ENCODE measurements at regions of chr17 and their contacts with region 1.

Region 1: GRCh38 chr17:7989781-7990655 is 12.4 kb upstream of the GUCY2D start:
- DNase-seq: peak; percentile 49
- ATAC-seq: peak; percentile 94
- H3K4me3 ChIP-seq: peak overlapping the region; percentile 63; the same call in 1 of the 2 replicates
- H3K27ac ChIP-seq: no peak overlapping the region
- H3K4me1 ChIP-seq: peaks cover 5% of the 10 kb centered on the region
- H3K27me3 ChIP-seq: 0 out of 4 replicates have a peak, but pooled peaks cover 0 to 2% of the 10 kb centered on the region in 2 experiments
- CTCF ChIP-seq: peak; percentile 93 to 98 (median 94)
- EP300 ChIP-seq: no peak
- POLR2A ChIP-seq: peak; percentile 74
- RAD21 ChIP-seq: peak; percentile 68

Region 2: DNA sequence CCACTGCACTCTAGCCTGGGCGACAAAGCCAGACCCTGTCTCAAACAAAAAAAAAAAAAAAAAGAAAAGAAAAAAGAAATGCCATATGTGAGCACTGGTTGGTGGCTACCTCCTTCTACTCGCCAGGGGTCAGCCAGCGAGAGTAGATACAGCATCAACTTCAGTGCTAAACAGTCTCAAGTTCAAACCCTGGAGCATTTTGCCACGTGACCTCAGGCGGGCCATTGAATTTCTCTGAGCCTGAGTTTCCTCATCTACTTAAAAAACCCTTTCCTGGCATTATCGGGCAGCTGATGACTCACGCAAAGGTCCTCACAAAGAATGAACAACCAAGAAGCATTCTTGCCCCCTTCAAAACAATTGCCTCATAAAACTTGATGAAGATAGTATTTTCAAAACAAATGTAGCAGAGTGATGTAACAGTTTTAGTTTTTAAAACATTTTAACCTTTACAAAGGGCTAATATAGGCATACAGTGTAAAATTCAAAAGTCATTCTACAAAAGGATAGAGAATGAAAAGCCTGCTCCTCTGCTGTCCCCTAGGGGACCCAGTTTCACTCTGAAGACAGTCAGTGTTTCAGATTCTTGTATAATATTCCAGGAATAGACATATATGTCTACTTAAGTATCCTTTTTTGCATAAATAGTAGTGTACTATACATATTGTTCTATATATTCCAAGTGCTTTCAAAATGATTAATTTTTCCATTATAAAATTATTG is 244.1 kb before region 1 on chr17:
- CTCF ChIA-PET with region 1: interaction called, 50 read pairs
- POLR2A ChIA-PET with region 1: no interaction called
- RAD21 ChIA-PET with region 1: interaction called, 28 read pairs
- SMC1A ChIA-PET with region 1: interaction called, 25 read pairs
- in situ Hi-C with region 1: no loop called
- intact Hi-C with region 1: loop called (anchors 1 kb)
- DNase-seq: no peak
- ATAC-seq: no peak
- H3K4me3 ChIP-seq: no peak overlapping the region
- H3K27ac ChIP-seq: no peak overlapping the region
- H3K4me1 ChIP-seq: no peaks in the 10 kb centered on the region
- H3K27me3 ChIP-seq: no peaks in the 10 kb centered on the region; a peak in 3 of 4 replicates
- CTCF ChIP-seq: no peak
- EP300 ChIP-seq: no peak
- POLR2A ChIP-seq: no peak
- RAD21 ChIP-seq: no peak

Region 3: GRCh38 chr17:7856883-7857723 is 132.9 kb before region 1 on chr17 and contains the start of gene NAA38:
- CTCF ChIA-PET with region 1: interaction called, 308 read pairs
- POLR2A ChIA-PET with region 1: interaction called, 3 read pairs
- RAD21 ChIA-PET with region 1: interaction called, 65 read pairs
- SMC1A ChIA-PET with region 1: interaction called, 41 read pairs
- in situ Hi-C with region 1: loop called (anchors 5 kb)
- intact Hi-C with region 1: loop called (anchors 1 kb)
- DNase-seq: peak; percentile 100
- ATAC-seq: peak; percentile 91
- H3K4me3 ChIP-seq: peak within 1 kb of the TSS; percentile 96
- H3K27ac ChIP-seq: peak within 1 kb of the TSS; percentile 96
- H3K4me1 ChIP-seq: peaks cover 18% of the 10 kb centered on the region
- H3K27me3 ChIP-seq: no peaks in the 10 kb centered on the region
- CTCF ChIP-seq: peak in 2 of 3 experiments; percentile 48 to 69; a peak in 5 of 6 replicates
- EP300 ChIP-seq: no peak; a peak in 1 of 4 replicates
- POLR2A ChIP-seq: peak; percentile 76
- RAD21 ChIP-seq: no peak
- polyA plus RNA-seq, gene NAA38: 206 to 231 TPM

Region 4: GRCh38 chr17:7922845-7923628 is 67.0 kb before region 1 on chr17:
- CTCF ChIA-PET with region 1: interaction called, 10 read pairs
- POLR2A ChIA-PET with region 1: no interaction called
- RAD21 ChIA-PET with region 1: interaction called, 3 read pairs
- SMC1A ChIA-PET with region 1: interaction called, 3 read pairs
- in situ Hi-C with region 1: no loop called
- intact Hi-C with region 1: no loop called
- DNase-seq: no peak
- ATAC-seq: peak; percentile 87
- H3K4me3 ChIP-seq: no peak overlapping the region; the same call in 1 of the 2 replicates
- H3K27ac ChIP-seq: no peak overlapping the region
- H3K4me1 ChIP-seq: peaks cover 7% of the 10 kb centered on the region
- H3K27me3 ChIP-seq: no peaks in the 10 kb centered on the region
- CTCF ChIP-seq: no peak
- EP300 ChIP-seq: 0 out of 4 replicates have a peak, but pooled peaks of 1 of the 2 experiments have one; percentile 11
- POLR2A ChIP-seq: peak; percentile 73
- RAD21 ChIP-seq: no peak

Region 5: DNA sequence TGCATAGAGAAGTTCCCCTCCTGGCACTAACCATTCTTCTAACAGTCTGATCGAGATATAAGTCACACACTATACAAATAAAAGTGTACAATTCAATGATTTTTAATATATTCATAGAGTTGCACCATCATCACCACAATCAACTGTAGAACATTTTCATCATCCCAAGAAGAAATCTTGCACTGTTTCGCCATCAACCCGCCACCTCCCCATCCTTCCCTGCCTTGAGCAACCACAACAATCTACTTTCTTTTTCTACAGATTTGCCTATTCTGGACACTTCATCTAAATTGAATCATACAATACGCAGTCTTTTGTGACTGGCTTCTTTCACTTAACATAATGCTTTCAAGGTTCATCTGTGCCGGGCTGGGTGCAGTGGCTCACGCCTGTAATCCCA is 20.6 kb before region 1 on chr17:
- CTCF ChIA-PET with region 1: interaction called, 12 read pairs
- POLR2A ChIA-PET with region 1: no interaction called
- RAD21 ChIA-PET with region 1: no interaction called
- SMC1A ChIA-PET with region 1: interaction called, 3 read pairs
- in situ Hi-C with region 1: no loop called
- intact Hi-C with region 1: no loop called
- DNase-seq: no peak
- ATAC-seq: no peak
- H3K4me3 ChIP-seq: no peak overlapping the region
- H3K27ac ChIP-seq: no peak overlapping the region
- H3K4me1 ChIP-seq: no peaks in the 10 kb centered on the region
- H3K27me3 ChIP-seq: no peaks in the 10 kb centered on the region
- CTCF ChIP-seq: no peak
- EP300 ChIP-seq: no peak
- POLR2A ChIP-seq: no peak
- RAD21 ChIP-seq: no peak

Measured in GM12878 (cell line).